Caco-2 (cell line): ENCODE measurements at regions of chr17 and their contacts with region 1.

Region 1: DNA sequence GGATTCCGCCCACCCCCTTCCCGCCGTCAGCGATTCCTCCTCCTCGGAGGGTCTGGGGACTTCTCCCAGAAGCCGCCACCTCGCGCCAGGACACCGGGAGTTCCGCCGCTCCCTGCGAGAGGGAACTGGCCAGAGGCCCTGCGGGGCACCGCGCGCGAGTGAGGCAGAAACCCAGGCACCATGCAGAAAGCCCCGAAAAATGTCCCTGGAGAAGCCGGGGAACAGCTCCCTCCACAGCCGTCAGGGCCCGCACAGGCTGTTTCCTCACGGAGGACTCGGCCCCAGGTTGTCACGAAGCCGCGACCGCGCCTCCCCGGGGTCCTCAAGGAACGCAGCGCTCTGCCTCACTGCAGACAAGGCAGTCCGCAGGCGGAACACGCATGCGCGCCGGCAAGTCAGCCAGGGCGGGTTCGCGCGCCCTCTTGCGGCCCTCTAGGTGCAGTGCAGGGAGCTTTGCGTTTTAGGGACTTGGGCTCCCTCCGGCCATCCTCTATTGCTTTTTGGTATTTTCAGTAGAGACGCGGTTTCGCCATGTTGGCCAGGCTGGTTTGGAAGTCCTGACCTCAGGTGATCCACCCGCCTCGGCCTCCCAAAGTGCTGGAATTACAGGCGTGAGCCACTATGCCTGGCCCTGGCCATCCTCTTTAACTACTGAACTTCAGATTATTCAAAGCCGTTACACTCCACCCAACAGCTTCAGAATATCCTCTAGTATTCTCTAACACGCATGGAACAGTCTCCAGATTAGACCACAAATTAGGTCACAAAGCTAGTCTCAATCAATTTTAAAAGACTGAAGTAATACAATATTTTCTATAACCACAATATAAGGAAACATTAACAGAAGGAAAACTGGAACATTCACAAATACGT is 20.3 kb upstream of the ZNF287 start:
- DNase-seq: peak; percentile 92 to 95
- H3K4me3 ChIP-seq: peak overlapping the region; percentile 57
- H3K4me3 Mint-ChIP-seq: peak overlapping the region; percentile 74
- H3K27ac Mint-ChIP-seq: no peak overlapping the region
- H3K4me1 ChIP-seq: no peaks in the 10 kb centered on the region
- H3K4me1 Mint-ChIP-seq: peaks cover 3% of the 10 kb centered on the region
- H3K27me3 ChIP-seq: no peaks in the 10 kb centered on the region; the same call in none of the 2 replicates
- H3K27me3 Mint-ChIP-seq: peaks cover 7% of the 10 kb centered on the region
- CTCF ChIP-seq: peak; percentile 98

Region 2: DNA sequence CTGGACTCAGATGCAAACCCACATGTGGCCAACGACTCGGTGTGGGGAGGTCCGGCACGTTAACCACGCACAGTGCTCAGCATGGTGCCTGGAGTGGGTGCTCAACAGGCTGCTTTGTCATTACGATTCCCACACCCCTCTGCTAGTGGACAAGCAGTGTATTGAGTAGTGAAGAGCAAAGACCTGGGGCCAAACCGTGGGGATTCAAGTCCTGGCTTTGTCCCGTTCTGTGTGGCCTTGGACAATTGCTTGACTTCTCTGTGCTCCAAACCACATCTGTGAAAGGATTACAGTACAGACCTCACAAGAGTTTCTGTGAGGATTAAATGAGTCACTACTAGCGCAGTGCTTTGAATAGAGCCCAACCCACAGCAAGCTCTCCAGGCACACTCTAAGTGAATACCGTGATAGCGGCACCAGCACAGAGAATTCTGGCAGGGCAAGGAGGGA is 140.2 kb before region 1 on chr17:
- CTCF ChIA-PET with region 1: interaction called, 3 read pairs
- POLR2A ChIA-PET with region 1: no interaction called
- intact Hi-C with region 1: loop called (anchors 1 kb)
- DNase-seq: no peak
- H3K4me3 ChIP-seq: no peak overlapping the region
- H3K4me3 Mint-ChIP-seq: no peak overlapping the region
- H3K27ac Mint-ChIP-seq: no peak overlapping the region
- H3K4me1 ChIP-seq: peaks cover 6% of the 10 kb centered on the region; the same call in 1 of the 2 replicates
- H3K4me1 Mint-ChIP-seq: peaks cover 8% of the 10 kb centered on the region
- H3K27me3 ChIP-seq: no peaks in the 10 kb centered on the region
- H3K27me3 Mint-ChIP-seq: no peaks in the 10 kb centered on the region
- CTCF ChIP-seq: no peak

Region 3: GRCh38 chr17:16537130-16537458 is 52.2 kb before region 1 on chr17:
- CTCF ChIA-PET with region 1: interaction called, 10 read pairs
- POLR2A ChIA-PET with region 1: no interaction called
- intact Hi-C with region 1: loop called (anchors 1 kb)
- DNase-seq: no peak
- H3K4me3 ChIP-seq: no peak overlapping the region
- H3K4me3 Mint-ChIP-seq: peak overlapping the region; percentile 99
- H3K27ac Mint-ChIP-seq: peak overlapping the region; percentile 32
- H3K4me1 ChIP-seq: 0 out of 2 replicates have a peak, but pooled peaks cover 8% of the 10 kb centered on the region
- H3K4me1 Mint-ChIP-seq: no peaks in the 10 kb centered on the region
- H3K27me3 ChIP-seq: no peaks in the 10 kb centered on the region
- H3K27me3 Mint-ChIP-seq: no peaks in the 10 kb centered on the region
- CTCF ChIP-seq: no peak

Region 4: GRCh38 chr17:16653209-16654041 is 64.1 kb after region 1 on chr17 and contains the start of gene ZNF624:
- CTCF ChIA-PET with region 1: interaction called, 3 read pairs
- POLR2A ChIA-PET with region 1: no interaction called
- intact Hi-C with region 1: loop called (anchors 1 kb)
- DNase-seq: peak; percentile 96
- H3K4me3 ChIP-seq: peak within 1 kb of the TSS; percentile 68
- H3K4me3 Mint-ChIP-seq: peak within 1 kb of the TSS; percentile 95
- H3K27ac Mint-ChIP-seq: peak within 1 kb of the TSS; percentile 95
- H3K4me1 ChIP-seq: peaks cover 8% of the 10 kb centered on the region
- H3K4me1 Mint-ChIP-seq: peaks cover 9% of the 10 kb centered on the region
- H3K27me3 ChIP-seq: no peaks in the 10 kb centered on the region; the same call in 1 of the 2 replicates
- H3K27me3 Mint-ChIP-seq: no peaks in the 10 kb centered on the region
- CTCF ChIP-seq: no peak
- total RNA-seq, gene ZNF624: 6.2 and 7.6 TPM in 2 replicates

Region 5: DNA sequence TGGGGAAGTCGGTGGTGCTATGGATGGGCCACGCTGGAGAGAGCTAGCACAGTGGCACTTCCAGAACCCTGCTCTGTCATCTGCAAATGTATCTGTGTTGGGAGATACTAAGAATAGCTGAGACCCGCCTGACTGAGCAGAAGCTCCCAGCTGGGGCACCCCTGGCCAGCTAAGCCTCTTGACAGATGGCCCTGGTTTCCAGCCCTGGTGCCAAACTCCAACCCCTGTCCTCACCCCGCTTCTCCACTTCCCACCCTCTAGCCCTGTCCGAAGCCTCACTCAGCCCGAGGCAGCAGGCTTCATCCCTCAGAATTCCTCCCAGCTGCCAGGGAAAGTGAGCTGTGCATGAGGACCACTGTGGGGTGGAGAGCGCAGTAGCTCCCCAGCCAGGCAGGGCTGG is 225.1 kb after region 1 on chr17:
- CTCF ChIA-PET with region 1: no interaction called
- POLR2A ChIA-PET with region 1: no interaction called
- intact Hi-C with region 1: no loop called
- DNase-seq: no peak
- H3K4me3 ChIP-seq: no peak overlapping the region
- H3K4me3 Mint-ChIP-seq: no peak overlapping the region
- H3K27ac Mint-ChIP-seq: no peak overlapping the region
- H3K4me1 ChIP-seq: no peaks in the 10 kb centered on the region
- H3K4me1 Mint-ChIP-seq: no peaks in the 10 kb centered on the region
- H3K27me3 ChIP-seq: no peaks in the 10 kb centered on the region
- H3K27me3 Mint-ChIP-seq: peaks cover 12% of the 10 kb centered on the region
- CTCF ChIP-seq: no peak